Activated CD8-positive, alpha-beta T cell treated with anti-CD3 and anti-CD28 coated beads for 36 hours (primary cell): ENCODE measurements at regions of chr3 and their contacts with region 1.

Region 1: GRCh38 chr3:56801662-56802377 is at the start of gene ARHGEF3:
- DNase-seq: peak; percentile 89
- ATAC-seq: peak; percentile 82
- H3K4me3 Mint-ChIP-seq: peak within 1 kb of the TSS; percentile 87
- H3K27ac Mint-ChIP-seq: peak within 1 kb of the TSS; percentile 91
- H3K4me1 Mint-ChIP-seq: peaks cover 24% of the 10 kb centered on the region
- H3K27me3 Mint-ChIP-seq: no peaks in the 10 kb centered on the region
- CTCF ChIP-seq: peak; percentile 61
- total RNA-seq, gene ARHGEF3: 63.0 to 66.5 TPM

Region 2: GRCh38 chr3:56737006-56737405 is 64.8 kb before region 1 on chr3:
- CTCF ChIA-PET with region 1: interaction called, 37 read pairs
- POLR2A ChIA-PET with region 1: no interaction called
- intact Hi-C with region 1: no loop called
- DNase-seq: no peak
- ATAC-seq: no peak
- H3K4me3 Mint-ChIP-seq: no peak overlapping the region
- H3K27ac Mint-ChIP-seq: no peak overlapping the region
- H3K4me1 Mint-ChIP-seq: peaks cover 57% of the 10 kb centered on the region
- H3K27me3 Mint-ChIP-seq: no peaks in the 10 kb centered on the region
- CTCF ChIP-seq: no peak

Region 3: DNA sequence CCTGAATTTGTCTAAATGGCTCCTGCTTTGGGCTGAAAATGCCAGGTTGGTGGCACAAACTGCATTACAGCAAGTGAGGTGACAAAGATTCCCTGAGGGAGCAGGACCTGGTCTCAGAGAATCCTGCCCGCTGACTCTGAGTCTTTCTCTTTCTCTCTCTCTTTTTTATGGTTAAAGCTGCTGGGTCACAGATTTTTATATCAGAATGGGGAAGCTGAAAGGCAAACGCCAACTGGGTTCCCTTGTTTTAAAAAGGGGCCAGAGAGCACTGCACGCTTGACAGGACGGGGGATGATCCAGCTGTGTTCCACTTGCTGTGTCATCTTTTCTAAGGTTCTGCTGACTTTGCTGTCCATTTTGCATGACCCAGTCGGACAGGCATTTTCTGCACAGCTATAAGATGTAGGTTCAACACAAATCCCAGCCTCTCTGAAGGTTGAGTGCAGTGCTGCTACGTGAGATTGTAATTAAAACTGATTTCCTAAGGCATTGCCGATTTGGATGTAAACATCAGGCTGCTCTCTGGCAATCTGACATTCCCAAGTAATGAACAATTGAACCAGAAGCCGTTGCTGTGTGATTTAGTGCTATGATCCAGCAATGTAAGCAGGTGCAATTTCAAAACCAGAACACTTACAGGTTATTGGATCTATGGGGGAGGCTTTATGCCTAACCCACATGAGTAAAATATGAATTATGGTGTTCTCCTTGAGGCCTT is 25.8 kb before region 1 on chr3:
- CTCF ChIA-PET with region 1: interaction called, 212 read pairs
- POLR2A ChIA-PET with region 1: interaction called, 4 read pairs
- intact Hi-C with region 1: no loop called
- DNase-seq: no peak
- ATAC-seq: no peak
- H3K4me3 Mint-ChIP-seq: peak overlapping the region; percentile 22
- H3K27ac Mint-ChIP-seq: peak overlapping the region; percentile 79
- H3K4me1 Mint-ChIP-seq: peaks cover 87% of the 10 kb centered on the region
- H3K27me3 Mint-ChIP-seq: no peaks in the 10 kb centered on the region
- CTCF ChIP-seq: no peak

Region 4: GRCh38 chr3:56819016-56819809 is 17.4 kb after region 1 on chr3:
- CTCF ChIA-PET with region 1: interaction called, 44 read pairs
- POLR2A ChIA-PET with region 1: interaction called, 3 read pairs
- intact Hi-C with region 1: no loop called
- DNase-seq: no peak
- ATAC-seq: no peak
- H3K4me3 Mint-ChIP-seq: no peak overlapping the region
- H3K27ac Mint-ChIP-seq: no peak overlapping the region
- H3K4me1 Mint-ChIP-seq: peaks cover 54% of the 10 kb centered on the region
- H3K27me3 Mint-ChIP-seq: no peaks in the 10 kb centered on the region
- CTCF ChIP-seq: no peak

Region 5: DNA sequence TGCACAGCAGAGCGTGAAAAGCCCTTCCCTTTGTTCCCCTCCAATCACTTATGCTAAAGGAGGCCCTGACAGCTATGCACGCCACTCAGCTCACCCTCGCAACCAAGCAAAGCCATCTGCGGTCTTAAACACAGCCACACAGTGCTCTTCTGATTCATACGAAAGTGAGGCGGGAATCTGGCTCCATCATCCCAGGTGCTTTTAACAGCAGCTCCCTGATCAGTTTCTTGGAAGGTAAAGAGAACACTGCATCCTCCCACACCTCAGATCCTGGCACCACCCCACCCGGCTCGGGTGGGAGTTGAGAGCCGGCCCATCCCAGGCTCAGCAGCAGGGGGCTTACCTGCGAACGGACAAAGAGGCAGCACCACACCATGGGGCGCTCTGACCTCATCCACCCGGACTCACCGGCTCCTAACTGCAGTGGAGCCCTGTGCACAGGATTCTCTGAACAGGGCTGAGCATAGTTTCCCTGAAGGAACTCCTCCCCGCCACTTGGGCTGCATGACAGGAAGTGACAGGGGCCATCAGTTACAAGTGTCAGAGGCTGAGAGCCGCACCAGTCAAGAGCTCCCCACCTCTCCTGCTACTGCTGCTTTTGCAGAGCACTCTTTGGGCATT is 114.3 kb after region 1 on chr3:
- CTCF ChIA-PET with region 1: interaction called, 72 read pairs
- POLR2A ChIA-PET with region 1: interaction called, 25 read pairs
- intact Hi-C with region 1: loop called (anchors 5 kb)
- DNase-seq: peak; percentile 90
- ATAC-seq: peak; percentile 86
- H3K4me3 Mint-ChIP-seq: peak overlapping the region; percentile 82
- H3K27ac Mint-ChIP-seq: peak overlapping the region; percentile 91
- H3K4me1 Mint-ChIP-seq: peaks cover 65% of the 10 kb centered on the region
- H3K27me3 Mint-ChIP-seq: no peaks in the 10 kb centered on the region
- CTCF ChIP-seq: no peak

Region 6: DNA sequence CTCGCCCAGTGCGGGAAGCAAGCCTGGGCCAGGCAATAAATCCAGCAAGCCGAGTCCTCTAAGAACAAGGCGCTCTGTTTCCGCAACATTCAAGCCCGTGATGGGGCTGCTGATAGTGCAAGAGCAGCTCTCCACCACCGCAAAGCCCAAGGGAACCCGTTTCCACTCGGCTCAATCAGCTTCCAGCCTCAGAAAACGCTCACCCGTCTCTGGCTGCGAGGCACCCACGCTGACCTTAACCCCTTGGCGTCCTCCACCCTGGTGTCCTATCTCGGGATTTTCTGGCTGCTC is 276.5 kb after region 1 on chr3:
- CTCF ChIA-PET with region 1: no interaction called
- POLR2A ChIA-PET with region 1: no interaction called
- intact Hi-C with region 1: no loop called
- DNase-seq: peak; percentile 46
- ATAC-seq: peak; percentile 50
- H3K4me3 Mint-ChIP-seq: peak overlapping the region; percentile 42
- H3K27ac Mint-ChIP-seq: no peak overlapping the region
- H3K4me1 Mint-ChIP-seq: peaks cover 7% of the 10 kb centered on the region
- H3K27me3 Mint-ChIP-seq: peaks cover 54% of the 10 kb centered on the region
- CTCF ChIP-seq: no peak